AG04450 (cell line): ENCODE measurements at regions of chrX and their contacts with region 1.

Region 1: DNA sequence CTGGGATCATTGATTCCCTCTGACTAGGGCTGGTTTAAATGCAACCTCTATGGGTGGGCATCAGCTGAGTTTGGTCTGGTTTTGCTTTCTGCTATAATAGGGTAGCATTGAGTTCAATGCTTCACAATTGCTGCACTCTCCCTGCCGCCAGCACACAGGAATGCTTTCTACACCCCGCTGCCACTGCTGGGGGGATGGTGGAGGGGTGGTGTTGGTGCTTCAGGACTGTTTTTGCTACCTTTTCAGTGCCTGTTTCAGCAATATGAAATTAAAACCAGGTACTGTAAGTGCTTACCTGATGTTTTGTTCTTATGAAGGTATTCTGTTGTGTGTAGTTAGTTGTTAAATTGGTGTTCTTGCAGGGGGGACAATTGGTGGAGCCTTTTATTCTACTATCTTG is 67.7 kb downstream of the GNL3L start:
- DNase-seq: no peak
- H3K4me3 ChIP-seq: no peak overlapping the region
- H3K27ac ChIP-seq: no peak overlapping the region
- H3K27me3 ChIP-seq: no peaks in the 10 kb centered on the region
- CTCF ChIP-seq: no peak

Region 2: DNA sequence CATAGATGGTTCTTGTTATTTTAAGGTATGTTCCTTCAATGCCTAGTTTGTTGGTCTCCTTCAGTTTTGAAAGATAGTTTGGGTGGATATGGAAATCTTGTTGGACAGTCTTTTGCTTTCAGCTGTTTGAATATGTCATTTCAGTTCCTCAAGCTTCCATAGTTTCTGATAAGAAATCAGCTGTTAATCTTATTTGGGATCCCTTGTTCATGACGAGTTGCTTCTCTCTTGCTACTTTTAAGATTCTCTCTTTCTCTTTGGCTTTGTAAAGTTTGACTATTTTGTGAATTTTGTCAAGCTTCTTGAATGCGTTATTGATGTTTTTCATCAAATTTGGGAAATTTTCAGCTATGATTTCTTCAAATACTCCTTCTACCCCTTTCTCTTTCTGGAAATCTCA is 61.8 kb after region 1 on chrX:
- CTCF ChIA-PET with region 1: no interaction called
- POLR2A ChIA-PET with region 1: interaction called, 12 read pairs
- DNase-seq: no peak
- H3K4me3 ChIP-seq: no peak overlapping the region
- H3K27ac ChIP-seq: no peak overlapping the region
- H3K27me3 ChIP-seq: no peaks in the 10 kb centered on the region
- CTCF ChIP-seq: no peak

Region 3: GRCh38 chrX:54999717-55000598 is 402.2 kb after region 1 on chrX and contains the start of gene APEX2:
- CTCF ChIA-PET with region 1: no interaction called
- POLR2A ChIA-PET with region 1: no interaction called
- DNase-seq: peak; percentile 77
- H3K4me3 ChIP-seq: peak within 1 kb of the TSS; percentile 78
- H3K27ac ChIP-seq: peak within 1 kb of the TSS; percentile 93
- H3K27me3 ChIP-seq: no peaks in the 10 kb centered on the region
- CTCF ChIP-seq: no peak
- polyA plus RNA-seq, gene APEX2: 15.0 and 15.8 TPM in 2 replicates